Dorsolateral prefrontal cortex (tissue), 120 donors: ENCODE measurements at regions of chr13 and their contacts with region 1.

Region 1: GRCh38 chr13:75482070-75482819 is at the start of gene TBC1D4:
- DNase-seq: peak; percentile 51 to 82 (median 72)
- H3K4me3 ChIP-seq: peak within 1 kb of the TSS; percentile 64 to 96 (median 81)
- H3K27ac ChIP-seq: peak within 1 kb of the TSS in 57 of 59 donors; percentile 43 to 89 (median 81)
- H3K27me3 ChIP-seq: peaks cover 0 to 7% (median 0%) of the 10 kb centered on the region in 45 donors
- CTCF ChIP-seq: peak; percentile 55 to 87 (median 75)
- total RNA-seq, gene TBC1D4: 11.9 to 37.3 (median 23.9) TPM

Region 2: DNA sequence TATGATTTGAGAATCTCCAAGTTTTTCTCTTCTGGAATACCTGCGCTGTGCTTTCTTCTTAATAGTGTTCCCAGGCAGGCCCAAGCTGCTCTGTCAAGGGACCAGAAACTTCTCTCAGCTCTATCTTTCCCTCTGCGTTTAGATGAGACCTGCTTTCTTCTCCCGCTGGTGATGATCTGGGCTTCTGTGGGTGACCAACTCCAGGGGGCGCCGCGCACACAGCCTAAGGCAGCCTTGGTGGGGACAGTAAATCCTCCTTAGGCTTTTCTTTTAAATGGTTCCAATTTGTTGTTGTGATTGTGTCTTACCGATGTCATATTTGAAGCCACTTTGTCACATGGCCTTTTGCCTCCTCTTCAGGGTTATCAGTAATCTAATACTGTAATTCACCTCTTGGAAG is 908.6 kb before region 1 on chr13:
- intact Hi-C with region 1: no loop called
- DNase-seq: no peak
- H3K4me3 ChIP-seq: no peak overlapping the region
- H3K27ac ChIP-seq: no peak overlapping the region
- H3K27me3 ChIP-seq: no peaks in the 10 kb centered on the region
- CTCF ChIP-seq: peak in 28 of 56 donors; percentile 7 to 43 (median 22)

Region 3: GRCh38 chr13:75372517-75372916 is 109.7 kb before region 1 on chr13:
- intact Hi-C with region 1: loop called (anchors 1 to 5 kb)
- DNase-seq: no peak
- H3K4me3 ChIP-seq: no peak overlapping the region
- H3K27ac ChIP-seq: peak overlapping the region in 6 of 59 donors; percentile 2 to 43 (median 34)
- H3K27me3 ChIP-seq: no peaks in the 10 kb centered on the region
- CTCF ChIP-seq: peak; percentile 62 to 84 (median 74)

Region 4: GRCh38 chr13:75530536-75530935 is 48.3 kb after region 1 on chr13:
- intact Hi-C with region 1: loop called (anchors 5 kb)
- DNase-seq: no peak
- H3K4me3 ChIP-seq: no peak overlapping the region
- H3K27ac ChIP-seq: no peak overlapping the region
- H3K27me3 ChIP-seq: no peaks in the 10 kb centered on the region
- CTCF ChIP-seq: no peak

Region 5: DNA sequence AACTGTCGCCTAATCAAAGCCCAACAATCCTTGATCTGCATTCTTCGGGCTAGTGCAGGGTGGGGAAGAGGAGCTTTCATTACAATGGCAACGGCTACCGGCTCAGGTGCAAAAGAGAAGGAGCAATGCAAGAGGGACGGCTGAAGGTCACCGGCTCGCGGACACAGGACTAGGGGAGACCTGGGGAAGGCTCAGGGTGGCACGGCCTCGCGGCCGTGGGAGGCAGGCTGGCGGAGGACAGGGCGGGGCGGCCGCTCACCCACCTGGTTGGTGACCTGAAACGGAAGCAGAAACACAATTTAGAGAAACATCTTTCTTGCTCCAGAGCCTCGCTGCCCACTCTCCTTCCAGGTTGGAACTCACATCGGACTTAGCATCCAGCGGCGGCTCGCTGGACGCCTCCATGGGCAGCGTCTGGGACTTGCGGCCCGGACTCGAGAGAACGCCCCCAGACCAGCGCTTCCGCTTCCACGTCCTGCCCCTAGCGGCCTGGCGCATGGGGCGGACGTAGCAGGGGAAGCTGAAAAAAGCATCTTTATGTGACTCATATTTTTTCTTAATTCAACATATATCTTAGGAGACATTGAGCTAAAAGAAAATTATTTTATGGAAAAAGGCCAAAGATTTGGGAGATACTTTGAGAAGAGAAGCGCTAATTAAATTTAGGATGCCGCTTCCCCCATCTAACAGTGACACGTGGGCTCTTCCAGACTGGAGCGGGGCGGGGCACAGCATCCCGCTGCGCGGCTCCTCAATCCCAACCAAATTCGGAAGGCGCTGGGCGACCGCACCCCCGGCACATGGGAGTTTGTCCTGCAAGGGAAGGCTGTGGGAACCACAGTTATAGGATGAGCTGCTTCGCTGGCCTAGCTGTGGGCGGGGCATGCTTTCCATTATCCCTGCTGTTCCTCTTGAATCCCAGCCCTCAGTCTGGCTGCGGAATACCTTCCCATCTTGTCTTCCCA is 55.4 kb after region 1 on chr13 and contains the start of gene COMMD6:
- intact Hi-C with region 1: loop called (anchors 5 kb)
- DNase-seq: peak; percentile 53 to 86 (median 81)
- H3K4me3 ChIP-seq: peak within 1 kb of the TSS; percentile 60 to 99 (median 93)
- H3K27ac ChIP-seq: peak within 1 kb of the TSS; percentile 25 to 92 (median 77)
- H3K27me3 ChIP-seq: no peaks in the 10 kb centered on the region
- CTCF ChIP-seq: peak in 55 of 56 donors; percentile 26 to 84 (median 63)
- total RNA-seq, gene COMMD6: 34.4 to 94.2 (median 57.6) TPM

Region 6: DNA sequence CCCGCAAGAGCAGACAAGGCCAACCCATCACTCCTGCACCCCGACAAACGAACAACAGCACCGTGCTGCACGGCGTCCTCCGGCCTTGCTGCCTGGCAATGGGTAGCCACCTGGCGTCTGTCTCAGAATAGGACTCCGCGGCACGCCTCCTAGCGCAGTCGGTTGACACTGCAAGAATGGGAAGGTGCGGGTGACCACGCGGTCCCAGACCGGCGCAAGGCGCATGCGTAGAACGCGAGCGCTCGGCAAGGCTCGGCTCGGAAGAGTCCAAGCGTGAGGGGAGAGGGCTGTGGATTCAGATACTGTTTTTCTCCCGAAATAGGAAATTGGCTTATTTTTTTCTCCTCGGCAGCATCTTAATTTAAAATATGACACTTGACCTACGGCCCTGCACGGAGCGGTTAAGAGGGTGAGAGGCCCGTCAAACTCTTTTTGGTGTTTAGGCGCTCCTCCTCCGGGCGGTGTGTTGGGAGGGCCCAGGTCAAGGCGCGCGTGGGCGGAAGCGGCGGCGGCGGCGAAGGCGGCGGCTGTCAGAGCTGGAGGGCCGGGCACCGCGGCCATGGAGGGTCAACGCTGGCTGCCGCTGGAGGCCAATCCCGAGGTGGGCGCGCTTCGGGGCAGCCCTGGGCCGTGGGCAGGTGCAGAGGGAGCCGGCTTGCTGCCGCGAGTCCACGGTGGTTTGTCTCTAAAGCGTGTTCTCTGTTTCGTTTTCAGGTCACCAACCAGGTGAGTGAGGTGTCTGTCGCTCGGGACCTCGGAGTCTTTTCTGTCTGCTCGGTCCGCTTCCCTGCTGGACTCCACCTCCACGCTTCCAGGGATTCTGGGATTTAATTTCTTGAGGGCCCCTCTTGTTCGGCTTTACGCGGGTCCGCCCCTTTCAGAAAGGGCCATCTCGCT is 67.3 kb after region 1 on chr13 and contains the start of gene UCHL3:
- intact Hi-C with region 1: loop called in 1 of 2 experiments (anchors 5 kb)
- DNase-seq: peak; percentile 90 to 96 (median 94)
- H3K4me3 ChIP-seq: peak within 1 kb of the TSS; percentile 62 to 99 (median 93)
- H3K27ac ChIP-seq: peak within 1 kb of the TSS; percentile 27 to 96 (median 87)
- H3K27me3 ChIP-seq: no peaks in the 10 kb centered on the region
- CTCF ChIP-seq: peak; percentile 36 to 97 (median 89)
- total RNA-seq, gene UCHL3: 10.6 to 31.0 (median 20.0) TPM